PC-9 (cell line): ENCODE measurements at regions of chr3 and their contacts with region 1.

Region 1: GRCh38 chr3:120417272-120417911 is 33.4 kb downstream of the FSTL1 start:
- DNase-seq: peak; percentile 91 to 92
- H3K4me3 ChIP-seq: peak overlapping the region; percentile 34; the same call in 1 of the 2 replicates
- H3K27ac ChIP-seq: peak overlapping the region; percentile 32; the same call in 1 of the 2 replicates
- H3K4me1 ChIP-seq: peaks cover 11% of the 10 kb centered on the region
- H3K27me3 ChIP-seq: no peaks in the 10 kb centered on the region
- CTCF ChIP-seq: peak; percentile 85

Region 2: GRCh38 chr3:118884748-118885206 is 1532.6 kb before region 1 on chr3:
- CTCF ChIA-PET with region 1: no interaction called
- POLR2A ChIA-PET with region 1: no interaction called
- intact Hi-C with region 1: loop called (anchors 10 kb)
- DNase-seq: peak in 1 of 2 experiments; percentile 66
- H3K4me3 ChIP-seq: no peak overlapping the region
- H3K27ac ChIP-seq: no peak overlapping the region
- H3K4me1 ChIP-seq: no peaks in the 10 kb centered on the region
- H3K27me3 ChIP-seq: no peaks in the 10 kb centered on the region
- CTCF ChIP-seq: peak; percentile 83

Region 3: GRCh38 chr3:119087799-119088198 is 1329.6 kb before region 1 on chr3:
- CTCF ChIA-PET with region 1: no interaction called
- POLR2A ChIA-PET with region 1: no interaction called
- intact Hi-C with region 1: no loop called
- DNase-seq: no peak
- H3K4me3 ChIP-seq: no peak overlapping the region
- H3K27ac ChIP-seq: no peak overlapping the region
- H3K4me1 ChIP-seq: peaks cover 8% of the 10 kb centered on the region; the same call in 1 of the 2 replicates
- H3K27me3 ChIP-seq: no peaks in the 10 kb centered on the region
- CTCF ChIP-seq: no peak

Region 4: DNA sequence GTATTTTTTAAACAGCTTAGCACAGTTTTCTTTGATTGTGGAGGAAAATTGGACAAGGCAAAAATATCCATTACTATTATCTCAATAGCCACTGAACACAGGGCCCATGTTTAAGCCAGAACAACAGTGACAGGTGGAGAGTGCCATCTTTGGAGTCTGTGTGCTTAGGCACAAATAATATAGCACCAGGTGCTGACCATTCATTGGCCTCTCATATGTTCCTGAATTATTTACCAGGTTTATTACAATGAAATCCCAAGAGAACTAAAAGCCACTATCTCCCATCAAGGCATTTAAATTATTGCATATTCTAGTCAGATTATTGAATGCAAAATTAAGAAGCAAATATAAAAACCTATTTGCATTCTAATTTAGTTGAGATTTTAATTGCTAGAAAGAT is 172.0 kb before region 1 on chr3:
- CTCF ChIA-PET with region 1: interaction called, 5 read pairs
- POLR2A ChIA-PET with region 1: no interaction called
- intact Hi-C with region 1: loop called (anchors 1 kb)
- DNase-seq: no peak
- H3K4me3 ChIP-seq: no peak overlapping the region
- H3K27ac ChIP-seq: no peak overlapping the region
- H3K4me1 ChIP-seq: no peaks in the 10 kb centered on the region
- H3K27me3 ChIP-seq: no peaks in the 10 kb centered on the region
- CTCF ChIP-seq: no peak

Region 5: DNA sequence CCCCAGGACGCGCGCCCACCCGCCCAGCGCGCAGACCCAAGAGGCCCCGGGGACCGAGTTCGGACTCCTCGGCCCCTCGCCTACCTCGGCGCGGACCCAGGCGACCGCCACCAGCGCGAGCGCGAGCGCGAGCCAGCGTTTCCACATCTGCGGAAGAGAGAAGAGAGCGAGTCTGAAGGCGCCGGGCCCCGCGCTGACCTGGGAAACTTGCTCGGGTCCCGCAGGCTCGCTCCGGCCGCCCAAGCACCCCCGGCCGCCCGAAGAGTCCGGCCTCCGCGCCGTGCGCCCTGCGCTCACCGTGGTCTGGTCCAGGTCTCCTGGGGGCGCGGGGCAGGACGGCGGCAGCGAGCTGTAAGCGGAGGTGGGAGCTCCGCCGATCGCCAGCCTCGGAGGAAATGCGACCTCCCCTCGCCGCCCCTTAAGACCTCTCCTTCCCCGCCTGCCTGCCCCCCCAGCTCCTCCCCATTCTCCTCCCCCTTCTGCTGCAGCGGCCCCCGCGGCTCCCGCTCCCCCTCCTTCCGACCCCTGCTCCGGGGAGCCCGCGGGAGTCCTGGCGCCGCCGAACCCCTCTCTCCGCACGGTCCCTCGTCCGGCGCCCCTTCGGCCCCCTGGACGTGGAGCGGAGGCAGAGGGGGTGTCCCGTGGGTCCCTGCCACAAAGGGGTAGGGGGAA is 33.3 kb after region 1 on chr3 and contains the start of gene FSTL1:
- CTCF ChIA-PET with region 1: interaction called, 3 read pairs
- POLR2A ChIA-PET with region 1: no interaction called
- intact Hi-C with region 1: loop called (anchors 2 kb)
- DNase-seq: peak in 1 of 2 experiments; percentile 46
- H3K4me3 ChIP-seq: peak within 1 kb of the TSS; percentile 74
- H3K27ac ChIP-seq: peak within 1 kb of the TSS; percentile 53
- H3K4me1 ChIP-seq: peaks cover 20% of the 10 kb centered on the region
- H3K27me3 ChIP-seq: no peaks in the 10 kb centered on the region
- CTCF ChIP-seq: no peak
- total RNA-seq, gene FSTL1: 225 and 256 TPM in 2 replicates

Region 6: GRCh38 chr3:120506828-120507774 is 89.7 kb after region 1 on chr3:
- CTCF ChIA-PET with region 1: interaction called, 5 read pairs
- POLR2A ChIA-PET with region 1: no interaction called
- intact Hi-C with region 1: loop called (anchors 1 kb)
- DNase-seq: peak; percentile 30 to 47
- H3K4me3 ChIP-seq: no peak overlapping the region
- H3K27ac ChIP-seq: no peak overlapping the region
- H3K4me1 ChIP-seq: peaks cover 9% of the 10 kb centered on the region
- H3K27me3 ChIP-seq: no peaks in the 10 kb centered on the region
- CTCF ChIP-seq: peak; percentile 76